Activated CD4-positive, alpha-beta T cell treated with anti-CD3 and anti-CD28 coated beads for 36 hours (primary cell): ENCODE measurements at regions of chr6 and their contacts with region 1.

Region 1: DNA sequence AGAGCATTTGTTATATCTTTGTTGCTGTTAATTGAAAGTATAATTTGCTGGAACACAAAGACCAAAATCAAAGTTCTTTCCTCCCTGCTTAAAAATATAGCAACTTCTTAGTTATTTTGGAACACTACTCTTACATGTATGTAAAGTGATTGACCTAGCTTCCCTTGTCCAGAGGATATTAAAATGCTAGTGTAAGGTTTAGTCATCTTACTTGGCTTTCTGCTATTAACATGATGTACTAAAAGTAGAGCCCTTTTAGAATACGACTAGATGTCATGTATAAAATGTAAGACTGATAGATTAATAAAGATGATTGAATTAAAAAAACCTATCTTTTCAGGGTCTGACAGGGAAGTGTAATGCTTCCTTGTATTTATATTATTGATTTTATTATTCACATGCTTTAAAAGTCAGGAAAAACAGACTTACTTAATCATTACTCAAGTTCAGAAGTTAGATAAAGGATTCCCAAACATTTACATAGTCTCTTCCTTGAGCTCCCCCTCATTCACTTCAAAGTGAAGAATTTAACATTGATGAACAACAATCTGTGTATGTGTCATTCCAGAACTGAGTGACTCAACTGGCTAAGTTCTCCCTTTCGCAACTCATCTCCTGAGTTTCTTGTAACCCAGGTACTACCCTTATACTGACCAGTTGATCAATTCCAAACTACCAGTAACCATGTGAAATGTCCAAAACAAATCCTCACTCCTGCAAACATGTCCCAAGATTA is 50.9 kb downstream of the BTBD9 start:
- DNase-seq: no peak
- ATAC-seq: peak; percentile 70
- H3K4me3 Mint-ChIP-seq: no peak overlapping the region
- H3K27ac Mint-ChIP-seq: no peak overlapping the region
- H3K4me1 Mint-ChIP-seq: peaks cover 22% of the 10 kb centered on the region
- H3K27me3 Mint-ChIP-seq: no peaks in the 10 kb centered on the region

Region 2: DNA sequence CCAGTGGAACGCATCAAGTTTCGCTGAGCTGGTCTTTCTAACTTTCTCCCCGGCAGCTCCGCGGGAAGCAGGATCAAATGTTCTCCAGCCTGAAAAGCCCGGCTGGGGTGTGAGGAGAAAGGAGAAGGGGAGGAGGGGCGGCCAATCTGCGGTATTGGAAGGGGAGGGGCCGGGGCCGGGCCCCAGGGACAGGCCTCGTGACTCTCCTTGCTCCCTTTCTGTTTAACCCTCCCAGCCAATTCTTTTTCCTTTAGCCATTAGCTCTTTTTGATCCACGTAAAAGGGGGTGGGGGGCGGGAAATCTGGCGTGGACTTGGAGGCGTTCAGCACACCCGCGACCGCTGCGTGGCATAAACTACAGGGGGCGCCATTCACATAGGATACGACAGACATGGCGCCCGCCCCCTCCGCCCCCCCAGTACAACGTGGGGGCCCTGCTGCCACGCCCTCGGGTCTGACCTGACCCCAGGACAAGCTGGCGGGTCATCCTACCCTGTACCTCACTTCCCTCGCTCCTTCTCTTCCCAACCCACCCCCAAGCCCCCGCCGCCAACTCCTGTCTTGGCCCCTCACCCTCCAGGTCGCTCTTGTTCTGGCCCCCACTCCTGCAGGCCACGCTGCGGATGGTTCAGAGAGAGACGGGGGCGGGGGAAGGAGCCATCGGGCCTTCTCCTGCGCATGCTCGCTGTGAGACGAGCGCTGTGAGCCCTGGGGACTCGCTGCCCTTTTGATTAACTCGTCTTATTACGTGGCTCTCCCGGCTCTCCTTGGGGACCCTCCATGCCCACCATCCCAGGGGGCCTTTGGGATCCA is 883.4 kb before region 1 on chr6:
- CTCF ChIA-PET with region 1: no interaction called
- POLR2A ChIA-PET with region 1: no interaction called
- intact Hi-C with region 1: no loop called
- DNase-seq: peak; percentile 81
- ATAC-seq: peak; percentile 85
- H3K4me3 Mint-ChIP-seq: peak overlapping the region; percentile 57
- H3K27ac Mint-ChIP-seq: peak overlapping the region; percentile 10
- H3K4me1 Mint-ChIP-seq: peaks cover 11% of the 10 kb centered on the region
- H3K27me3 Mint-ChIP-seq: peaks cover 6% of the 10 kb centered on the region

Region 3: DNA sequence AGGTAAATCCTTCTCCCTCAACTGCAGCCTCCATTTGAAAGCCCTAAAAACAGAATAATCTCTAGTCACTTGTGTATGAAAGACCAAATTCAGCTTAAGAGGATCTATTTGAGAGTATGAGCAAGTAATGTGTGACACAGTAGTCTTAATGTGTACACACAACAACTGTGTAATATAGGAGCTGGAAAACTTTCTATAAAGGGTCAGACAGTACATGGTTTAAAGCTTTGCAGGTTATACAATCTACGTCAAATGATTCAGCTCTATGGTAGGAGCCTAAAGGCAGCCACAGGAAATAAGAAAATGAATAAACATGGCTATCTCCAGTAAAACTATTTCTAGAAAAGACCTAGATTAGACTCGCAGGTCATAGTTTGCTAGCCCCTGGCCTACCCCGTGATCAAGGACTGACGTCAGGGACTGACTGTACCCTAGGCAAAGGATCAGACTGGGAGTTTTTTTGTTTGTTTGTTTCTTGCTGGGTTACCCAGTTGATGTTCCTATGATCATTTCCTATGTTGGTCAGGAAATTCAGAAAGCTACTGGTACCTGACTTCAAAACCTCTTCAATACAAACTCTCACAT is 11.3 kb after region 1 on chr6:
- CTCF ChIA-PET with region 1: interaction called, 19 read pairs
- POLR2A ChIA-PET with region 1: no interaction called
- intact Hi-C with region 1: no loop called
- DNase-seq: no peak
- ATAC-seq: no peak
- H3K4me3 Mint-ChIP-seq: no peak overlapping the region
- H3K27ac Mint-ChIP-seq: no peak overlapping the region
- H3K4me1 Mint-ChIP-seq: no peaks in the 10 kb centered on the region
- H3K27me3 Mint-ChIP-seq: no peaks in the 10 kb centered on the region